ENCODE measurements at regions of chr13 and their contacts with region 1.

Region 1: GRCh38 chr13:38213314-38213713 is 136.3 kb upstream of the UFM1 start:
- DNase-seq: no peak
- ATAC-seq: no peak
- H3K4me3 ChIP-seq: no peak overlapping the region
- H3K27ac ChIP-seq: no peak overlapping the region
- H3K4me1 ChIP-seq: no peaks in the 10 kb centered on the region
- H3K27me3 ChIP-seq: no peaks in the 10 kb centered on the region
- CTCF ChIP-seq: no peak

Region 2: DNA sequence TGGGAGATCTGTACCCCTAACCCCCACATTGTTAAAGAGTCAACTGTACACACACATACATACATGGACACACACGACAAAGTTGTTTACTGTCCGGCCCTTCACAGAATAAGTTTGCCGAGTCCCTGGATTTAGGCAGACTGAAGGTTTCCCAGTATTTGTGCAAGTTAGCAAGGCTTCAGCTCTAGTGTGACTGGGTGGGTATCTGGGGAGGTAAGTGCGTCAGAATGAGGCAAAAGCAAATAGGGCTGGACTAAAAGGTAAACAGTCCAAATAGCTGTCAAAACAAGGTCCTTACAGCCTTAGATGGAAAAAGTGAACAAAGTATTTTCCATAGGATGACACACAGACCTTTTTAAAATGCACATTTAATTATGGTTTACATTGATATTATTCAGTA is 92.0 kb before region 1 on chr13:
- CTCF ChIA-PET with region 1: interaction called, 15 read pairs
- POLR2A ChIA-PET with region 1: no interaction called
- in situ Hi-C with region 1: no loop called
- intact Hi-C with region 1: no loop called
- DNase-seq: no peak
- ATAC-seq: no peak
- H3K4me3 ChIP-seq: no peak overlapping the region
- H3K27ac ChIP-seq: no peak overlapping the region
- H3K4me1 ChIP-seq: no peaks in the 10 kb centered on the region
- H3K27me3 ChIP-seq: no peaks in the 10 kb centered on the region
- CTCF ChIP-seq: no peak

Region 3: GRCh38 chr13:38255296-38255995 is 42.1 kb after region 1 on chr13:
- CTCF ChIA-PET with region 1: no interaction called
- POLR2A ChIA-PET with region 1: no interaction called
- in situ Hi-C with region 1: no loop called
- intact Hi-C with region 1: no loop called
- DNase-seq: no peak
- ATAC-seq: no peak
- H3K4me3 ChIP-seq: no peak overlapping the region
- H3K27ac ChIP-seq: no peak overlapping the region
- H3K4me1 ChIP-seq: no peaks in the 10 kb centered on the region
- H3K27me3 ChIP-seq: no peaks in the 10 kb centered on the region
- CTCF ChIP-seq: no peak